Breast epithelium (tissue), 4 donors: ENCODE measurements at regions of chr3 and their contacts with region 1.

Region 1: GRCh38 chr3:144810160-144810559 is 838.5 kb downstream of the DIPK2A start:
- DNase-seq: no peak
- H3K4me3 ChIP-seq: no peak overlapping the region
- H3K27ac ChIP-seq: no peak overlapping the region
- H3K4me1 ChIP-seq: no peaks in the 10 kb centered on the region
- H3K27me3 ChIP-seq: no peaks in the 10 kb centered on the region
- CTCF ChIP-seq: no peak
- POLR2A ChIP-seq: no peak

Region 2: GRCh38 chr3:143571548-143571947 is 1238.6 kb before region 1 on chr3:
- intact Hi-C with region 1: loop called (anchors 5 kb)
- DNase-seq: no peak
- H3K4me3 ChIP-seq: no peak overlapping the region
- H3K27ac ChIP-seq: peak overlapping the region in 1 of 2 donors; percentile 69
- H3K4me1 ChIP-seq: no peaks in the 10 kb centered on the region
- H3K27me3 ChIP-seq: no peaks in the 10 kb centered on the region
- CTCF ChIP-seq: no peak
- POLR2A ChIP-seq: no peak

Region 3: GRCh38 chr3:144791034-144791433 is 19.1 kb before region 1 on chr3:
- intact Hi-C with region 1: no loop called
- DNase-seq: no peak
- H3K4me3 ChIP-seq: no peak overlapping the region
- H3K27ac ChIP-seq: no peak overlapping the region
- H3K4me1 ChIP-seq: no peaks in the 10 kb centered on the region
- H3K27me3 ChIP-seq: no peaks in the 10 kb centered on the region
- CTCF ChIP-seq: no peak
- POLR2A ChIP-seq: no peak